WTC11 (cell line): ENCODE measurements at regions of chr13 and their contacts with region 1.

Region 1: DNA sequence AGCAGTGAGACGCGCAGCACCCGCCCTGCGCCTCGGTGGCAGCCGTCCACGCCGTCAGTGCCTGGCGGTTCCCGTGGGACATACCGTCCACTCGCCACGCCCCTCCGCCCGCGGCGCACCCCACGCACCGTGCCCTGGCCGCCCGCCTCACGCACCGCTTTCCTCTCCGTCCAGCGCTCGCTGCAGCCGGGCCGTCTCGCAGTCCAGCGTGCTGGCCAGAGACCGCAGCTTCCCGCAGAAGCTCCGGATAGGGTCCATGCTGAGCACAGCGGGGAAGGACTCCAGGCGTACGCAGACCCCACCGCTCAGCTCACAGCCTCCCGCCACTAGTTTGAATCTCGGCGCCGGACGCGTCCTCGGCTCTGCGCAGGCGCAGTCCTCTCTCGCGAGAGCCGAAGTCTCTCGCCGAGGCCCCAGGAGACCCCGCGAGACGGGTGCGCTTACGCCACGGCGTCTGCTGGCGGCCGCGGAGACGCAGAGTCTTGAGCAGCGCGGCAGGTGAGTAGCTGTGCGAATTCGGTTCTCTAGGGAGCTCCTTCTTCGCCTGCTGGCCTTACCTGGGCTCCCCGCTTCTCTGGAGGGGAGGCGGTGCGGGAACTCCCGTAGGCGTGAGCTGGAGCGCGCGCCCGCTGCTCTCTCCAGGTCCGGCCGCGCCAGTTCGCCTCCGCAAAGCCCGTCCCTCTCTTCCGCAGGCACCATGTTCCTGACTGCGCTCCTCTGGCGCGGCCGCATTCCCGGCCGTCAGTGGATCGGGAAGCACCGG is at the starts of genes MRPL57 and SKA3:
- DNase-seq: peak; percentile 96
- ATAC-seq: peak; percentile 90
- H3K4me3 Mint-ChIP-seq: peak within 1 kb of the TSS; percentile 95
- H3K27ac Mint-ChIP-seq: peak within 1 kb of the TSS; percentile 98
- H3K4me1 Mint-ChIP-seq: peaks cover 41% of the 10 kb centered on the region
- H3K27me3 Mint-ChIP-seq: no peaks in the 10 kb centered on the region
- CTCF ChIP-seq: no peak
- total RNA-seq, gene MRPL57: 29.4 to 32.3 TPM (median 32.1 TPM) in 3 replicates
- total RNA-seq, gene SKA3: 38.8 to 45.7 TPM (median 42.1 TPM) in 3 replicates

Region 2: GRCh38 chr13:21014502-21015170 is 161.8 kb before region 1 on chr13:
- CTCF ChIA-PET with region 1: no interaction called
- POLR2A ChIA-PET with region 1: no interaction called
- DNase-seq: no peak
- ATAC-seq: no peak
- H3K4me3 Mint-ChIP-seq: no peak overlapping the region
- H3K27ac Mint-ChIP-seq: peak overlapping the region; percentile 86
- H3K4me1 Mint-ChIP-seq: peaks cover 33% of the 10 kb centered on the region
- H3K27me3 Mint-ChIP-seq: no peaks in the 10 kb centered on the region
- CTCF ChIP-seq: no peak

Region 3: GRCh38 chr13:21111546-21111945 is 64.9 kb before region 1 on chr13:
- CTCF ChIA-PET with region 1: interaction called, 11 read pairs
- POLR2A ChIA-PET with region 1: interaction called, 4 read pairs
- DNase-seq: no peak
- ATAC-seq: no peak
- H3K4me3 Mint-ChIP-seq: no peak overlapping the region
- H3K27ac Mint-ChIP-seq: no peak overlapping the region
- H3K4me1 Mint-ChIP-seq: peaks cover 34% of the 10 kb centered on the region
- H3K27me3 Mint-ChIP-seq: no peaks in the 10 kb centered on the region
- CTCF ChIP-seq: no peak